ENCODE measurements at regions of chr3 and their contacts with region 1.

Region 1: GRCh38 chr3:30948426-30948825 is 54.0 kb upstream of the GADL1 start:
- DNase-seq: no peak
- H3K4me3 ChIP-seq: no peak overlapping the region
- H3K27ac ChIP-seq: no peak overlapping the region
- H3K4me1 ChIP-seq: no peaks in the 10 kb centered on the region
- H3K27me3 ChIP-seq: no peaks in the 10 kb centered on the region
- CTCF ChIP-seq: no peak

Region 2: GRCh38 chr3:31439890-31440750 is 491.7 kb after region 1 on chr3:
- CTCF ChIA-PET with region 1: no interaction called
- POLR2A ChIA-PET with region 1: interaction called, 10 read pairs
- intact Hi-C with region 1: no loop called
- DNase-seq: no peak
- H3K4me3 ChIP-seq: no peak overlapping the region
- H3K27ac ChIP-seq: no peak overlapping the region
- H3K4me1 ChIP-seq: peaks cover 12% of the 10 kb centered on the region
- H3K27me3 ChIP-seq: no peaks in the 10 kb centered on the region
- CTCF ChIP-seq: no peak